ENCODE measurements at regions of chr16 and their contacts with region 1.

Region 1: GRCh38 chr16:84144859-84145639 is at the starts of genes DNAAF1 and HSDL1:
- DNase-seq: peak; percentile 92
- H3K4me3 Mint-ChIP-seq: peak within 1 kb of the TSS; percentile 97
- H3K27ac Mint-ChIP-seq: peak within 1 kb of the TSS; percentile 86
- H3K4me1 Mint-ChIP-seq: peaks cover 7% of the 10 kb centered on the region
- H3K27me3 Mint-ChIP-seq: peaks cover 19% of the 10 kb centered on the region
- total RNA-seq, gene DNAAF1: not detected in 2 replicates
- total RNA-seq, gene HSDL1: 19.2 and 23.1 TPM in 2 replicates

Region 2: DNA sequence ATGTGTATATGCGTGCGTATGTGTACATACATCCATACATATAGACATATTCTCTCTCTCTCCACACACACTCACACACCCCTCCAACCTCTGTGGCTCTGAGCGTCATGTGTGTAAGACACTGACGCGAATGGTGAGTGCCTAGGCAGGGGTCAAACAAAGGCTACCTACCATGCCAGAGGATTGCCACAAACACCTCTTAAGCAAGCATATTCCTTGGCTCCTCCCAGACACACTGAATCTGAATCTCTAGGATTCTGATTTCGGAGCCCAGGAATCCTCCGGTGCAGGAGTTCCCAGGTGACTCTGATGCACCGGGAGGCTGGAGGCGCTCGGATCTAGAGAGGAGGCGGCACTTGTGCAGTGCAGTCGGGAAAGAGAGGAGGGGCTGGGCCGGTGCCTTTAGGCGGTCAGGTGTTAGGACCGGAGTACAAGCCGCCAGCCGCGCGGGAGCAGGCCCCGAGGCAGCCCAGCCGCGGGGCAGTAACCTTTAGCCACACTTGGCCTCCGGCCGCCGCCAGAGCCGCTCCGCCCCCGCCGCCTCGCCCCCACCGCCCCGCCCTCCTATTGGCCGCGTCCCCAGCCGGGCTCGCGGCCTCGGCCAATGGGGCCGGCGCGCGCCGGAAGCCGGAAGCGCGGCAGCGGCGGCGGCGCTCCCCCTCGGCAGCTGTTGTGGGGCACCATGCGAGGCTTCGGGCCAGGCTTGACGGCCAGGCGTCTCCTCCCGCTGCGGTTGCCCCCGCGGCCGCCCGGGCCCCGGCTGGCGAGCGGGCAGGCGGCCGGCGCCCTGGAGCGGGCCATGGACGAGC is 246.4 kb before region 1 on chr16 and contains the start of gene MLYCD:
- intact Hi-C with region 1: loop called (anchors 1 kb)
- DNase-seq: peak; percentile 73
- H3K4me3 Mint-ChIP-seq: peak within 1 kb of the TSS; percentile 94
- H3K27ac Mint-ChIP-seq: peak within 1 kb of the TSS; percentile 77
- H3K4me1 Mint-ChIP-seq: peaks cover 27% of the 10 kb centered on the region
- H3K27me3 Mint-ChIP-seq: peaks cover 10% of the 10 kb centered on the region
- total RNA-seq, gene MLYCD: 5.0 and 6.1 TPM in 2 replicates

Region 3: DNA sequence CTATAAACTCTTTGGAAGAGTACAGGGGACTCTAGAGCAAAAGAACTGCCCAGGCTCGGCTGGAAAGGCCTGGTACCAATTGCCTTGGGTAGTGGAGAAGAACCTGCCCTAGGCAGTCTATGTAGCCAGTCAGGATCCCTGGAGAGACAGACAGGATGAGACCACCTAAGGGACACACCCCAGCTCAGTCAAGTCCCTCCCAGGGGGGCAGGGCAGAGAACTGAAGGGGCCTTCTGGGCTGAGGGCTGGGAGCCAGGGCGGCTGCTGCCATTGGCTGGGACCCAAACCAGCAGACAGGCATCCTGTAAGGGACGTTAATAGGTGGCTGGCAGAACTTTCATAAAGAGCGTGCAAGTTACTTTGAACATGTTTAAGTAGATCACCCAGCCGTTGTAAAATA is 89.7 kb before region 1 on chr16:
- intact Hi-C with region 1: no loop called
- DNase-seq: no peak
- H3K4me3 Mint-ChIP-seq: no peak overlapping the region
- H3K27ac Mint-ChIP-seq: no peak overlapping the region
- H3K4me1 Mint-ChIP-seq: no peaks in the 10 kb centered on the region
- H3K27me3 Mint-ChIP-seq: no peaks in the 10 kb centered on the region

Region 4: DNA sequence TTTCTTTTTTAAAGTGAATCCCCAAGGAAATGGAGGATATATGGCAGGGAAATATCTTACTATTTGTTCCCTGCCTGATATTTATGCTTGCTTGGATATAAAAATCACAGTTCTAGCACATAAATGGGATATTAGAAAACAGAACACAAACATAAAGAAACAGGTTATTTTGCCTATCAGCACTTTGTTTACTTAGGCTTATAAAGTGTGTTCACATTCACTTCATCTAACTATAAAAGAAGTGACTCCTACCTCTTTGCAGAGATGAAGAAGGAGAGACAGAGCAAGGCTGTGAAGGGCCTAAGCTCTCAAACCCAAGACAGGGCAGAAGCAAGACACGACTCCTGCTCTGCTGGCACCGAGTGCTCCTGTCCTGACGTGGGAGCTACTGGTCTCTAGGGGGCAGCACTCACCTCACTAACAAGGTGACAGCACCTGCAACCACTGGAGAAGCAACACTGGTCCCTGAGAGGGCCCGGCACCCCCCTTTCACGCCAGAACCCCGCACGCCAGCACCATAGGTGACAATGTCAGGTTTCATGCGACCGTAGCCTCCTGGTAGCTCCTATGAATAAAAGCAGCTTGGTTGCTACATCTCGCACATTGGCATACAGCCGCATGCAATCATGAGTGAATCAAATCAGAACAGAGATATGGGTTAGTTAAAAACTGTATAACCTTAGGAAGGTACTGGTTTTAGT is 60.3 kb before region 1 on chr16:
- intact Hi-C with region 1: loop called (anchors 1 kb)
- DNase-seq: peak; percentile 53
- H3K4me3 Mint-ChIP-seq: no peak overlapping the region
- H3K27ac Mint-ChIP-seq: no peak overlapping the region
- H3K4me1 Mint-ChIP-seq: peaks cover 43% of the 10 kb centered on the region
- H3K27me3 Mint-ChIP-seq: no peaks in the 10 kb centered on the region

Region 5: DNA sequence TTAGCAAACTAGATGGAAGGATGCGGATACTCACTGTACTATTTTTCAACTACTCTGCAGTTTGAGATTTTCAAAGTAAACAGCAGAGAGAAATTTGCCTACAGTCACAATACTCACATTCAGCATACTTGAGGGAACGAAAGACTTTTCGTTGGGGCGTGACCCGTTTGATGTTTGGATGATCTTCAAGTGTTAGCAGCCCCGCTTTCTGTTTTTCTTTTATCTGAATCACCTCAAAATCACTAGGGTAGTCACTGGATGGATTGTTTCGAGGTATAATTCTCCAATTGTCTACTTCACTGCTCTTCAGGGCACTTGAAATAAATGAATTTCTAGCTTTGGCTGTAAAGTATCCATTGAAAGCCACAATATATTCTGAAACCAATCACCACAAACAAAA is 46.1 kb before region 1 on chr16:
- intact Hi-C with region 1: loop called (anchors 1 kb)
- DNase-seq: no peak
- H3K4me3 Mint-ChIP-seq: no peak overlapping the region
- H3K27ac Mint-ChIP-seq: no peak overlapping the region
- H3K4me1 Mint-ChIP-seq: peaks cover 15% of the 10 kb centered on the region
- H3K27me3 Mint-ChIP-seq: no peaks in the 10 kb centered on the region

Region 6: GRCh38 chr16:84109598-84110325 is 35.3 kb before region 1 on chr16:
- intact Hi-C with region 1: no loop called
- DNase-seq: no peak
- H3K4me3 Mint-ChIP-seq: no peak overlapping the region
- H3K27ac Mint-ChIP-seq: no peak overlapping the region
- H3K4me1 Mint-ChIP-seq: peaks cover 28% of the 10 kb centered on the region
- H3K27me3 Mint-ChIP-seq: no peaks in the 10 kb centered on the region

Region 7: DNA sequence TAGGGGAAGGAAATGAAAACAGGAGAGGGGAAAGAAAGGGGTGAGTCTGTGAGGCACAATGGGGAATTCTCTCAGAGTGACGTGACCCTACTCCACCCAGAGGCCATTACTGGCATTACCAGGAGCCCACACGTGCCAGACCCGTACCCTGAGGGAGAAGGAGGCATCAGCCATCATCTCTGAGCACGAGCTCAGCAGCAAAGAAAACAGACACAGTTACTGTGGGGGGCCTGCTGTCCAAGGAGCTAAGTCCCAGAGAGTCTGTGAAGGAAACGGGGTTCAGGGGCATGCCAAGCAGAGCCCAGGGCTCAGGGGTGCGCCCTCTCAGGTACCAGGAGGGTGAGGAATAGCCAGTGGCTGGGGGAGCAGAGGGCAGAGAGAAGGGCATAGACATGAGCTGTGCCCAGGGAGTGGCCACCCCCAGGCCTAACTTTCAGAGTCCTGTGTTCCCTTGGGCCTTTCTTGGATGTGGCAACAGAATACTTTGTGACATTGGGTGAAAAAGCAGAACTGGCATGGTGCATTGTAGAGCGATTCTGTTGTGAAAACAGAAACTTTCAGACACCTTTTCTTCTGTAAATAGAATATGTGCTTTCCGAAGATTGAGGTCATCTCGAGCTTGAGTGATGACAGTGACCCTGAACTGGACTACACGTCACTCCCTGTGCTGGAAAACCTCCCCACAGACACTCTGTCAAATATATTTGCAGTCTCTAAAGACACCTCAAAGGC is 30.5 kb after region 1 on chr16:
- intact Hi-C with region 1: loop called (anchors 2 kb)
- DNase-seq: peak; percentile 32
- H3K4me3 Mint-ChIP-seq: no peak overlapping the region
- H3K27ac Mint-ChIP-seq: no peak overlapping the region
- H3K4me1 Mint-ChIP-seq: peaks cover 6% of the 10 kb centered on the region
- H3K27me3 Mint-ChIP-seq: no peaks in the 10 kb centered on the region

Region 8: GRCh38 chr16:84186685-84187437 is 41.8 kb after region 1 on chr16 and contains the start of gene TAF1C:
- intact Hi-C with region 1: loop called (anchors 1 kb)
- DNase-seq: peak; percentile 86
- H3K4me3 Mint-ChIP-seq: peak within 1 kb of the TSS; percentile 95
- H3K27ac Mint-ChIP-seq: peak within 1 kb of the TSS; percentile 89
- H3K4me1 Mint-ChIP-seq: peaks cover 6% of the 10 kb centered on the region
- H3K27me3 Mint-ChIP-seq: no peaks in the 10 kb centered on the region
- total RNA-seq, gene TAF1C: 67.9 and 74.4 TPM in 2 replicates